ENCODE measurements at regions of chr1 and their contacts with region 1.

Region 1: GRCh38 chr1:100875228-100875627 is 19.4 kb downstream of the EXTL2 start:
- DNase-seq: no peak
- ATAC-seq: no peak
- H3K4me3 ChIP-seq: no peak overlapping the region
- H3K27ac ChIP-seq: no peak overlapping the region
- H3K4me1 ChIP-seq: no peaks in the 10 kb centered on the region
- H3K27me3 ChIP-seq: no peaks in the 10 kb centered on the region
- CTCF ChIP-seq: no peak

Region 2: GRCh38 chr1:99170516-99170915 is 1704.7 kb before region 1 on chr1:
- intact Hi-C with region 1: loop called in 1 of 10 experiments (anchors 10 kb)
- DNase-seq: no peak
- ATAC-seq: no peak
- H3K4me3 ChIP-seq: no peak overlapping the region
- H3K27ac ChIP-seq: no peak overlapping the region
- H3K4me1 ChIP-seq: no peaks in the 10 kb centered on the region
- H3K27me3 ChIP-seq: peaks cover 0 to 3% (median 0%) of the 10 kb centered on the region in 7 donors
- CTCF ChIP-seq: no peak

Region 3: DNA sequence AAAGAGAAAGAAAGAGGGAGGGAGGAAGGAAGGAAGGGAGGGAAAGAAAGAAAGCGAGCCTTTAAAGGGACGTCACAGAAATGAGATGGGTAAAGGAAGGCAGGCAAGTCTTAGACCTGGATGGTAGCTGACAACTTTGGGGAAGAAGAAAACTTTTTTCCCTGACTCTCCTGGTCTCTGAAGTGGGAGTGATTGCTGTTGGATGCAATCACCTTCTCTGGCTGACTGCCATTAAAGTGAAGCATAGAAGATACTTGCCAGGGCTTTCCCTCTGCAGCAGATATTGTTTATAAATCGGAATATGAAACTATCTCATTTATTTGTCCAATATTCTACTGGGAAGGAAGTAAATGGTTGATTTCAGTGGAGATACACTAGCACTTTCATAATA is 128.7 kb before region 1 on chr1:
- intact Hi-C with region 1: no loop called
- DNase-seq: no peak
- ATAC-seq: no peak
- H3K4me3 ChIP-seq: no peak overlapping the region
- H3K27ac ChIP-seq: no peak overlapping the region
- H3K4me1 ChIP-seq: no peaks in the 10 kb centered on the region
- H3K27me3 ChIP-seq: no peaks in the 10 kb centered on the region
- CTCF ChIP-seq: no peak

Region 4: GRCh38 chr1:101071470-101071891 is 196.3 kb after region 1 on chr1:
- intact Hi-C with region 1: no loop called
- DNase-seq: no peak
- ATAC-seq: peak in 5 of 8 donors; percentile 37 to 50 (median 39)
- H3K4me3 ChIP-seq: no peak overlapping the region
- H3K27ac ChIP-seq: peak overlapping the region in 3 of 10 donors; percentile 4 to 23 (median 11)
- H3K4me1 ChIP-seq: peaks cover 0 to 26% (median 17%) of the 10 kb centered on the region in 9 donors
- H3K27me3 ChIP-seq: no peaks in the 10 kb centered on the region
- CTCF ChIP-seq: no peak

Measured in heart right ventricle (tissue), 16 donors.